HEK293 (cell line): ENCODE measurements at regions of chr11 and their contacts with region 1.

Region 1: DNA sequence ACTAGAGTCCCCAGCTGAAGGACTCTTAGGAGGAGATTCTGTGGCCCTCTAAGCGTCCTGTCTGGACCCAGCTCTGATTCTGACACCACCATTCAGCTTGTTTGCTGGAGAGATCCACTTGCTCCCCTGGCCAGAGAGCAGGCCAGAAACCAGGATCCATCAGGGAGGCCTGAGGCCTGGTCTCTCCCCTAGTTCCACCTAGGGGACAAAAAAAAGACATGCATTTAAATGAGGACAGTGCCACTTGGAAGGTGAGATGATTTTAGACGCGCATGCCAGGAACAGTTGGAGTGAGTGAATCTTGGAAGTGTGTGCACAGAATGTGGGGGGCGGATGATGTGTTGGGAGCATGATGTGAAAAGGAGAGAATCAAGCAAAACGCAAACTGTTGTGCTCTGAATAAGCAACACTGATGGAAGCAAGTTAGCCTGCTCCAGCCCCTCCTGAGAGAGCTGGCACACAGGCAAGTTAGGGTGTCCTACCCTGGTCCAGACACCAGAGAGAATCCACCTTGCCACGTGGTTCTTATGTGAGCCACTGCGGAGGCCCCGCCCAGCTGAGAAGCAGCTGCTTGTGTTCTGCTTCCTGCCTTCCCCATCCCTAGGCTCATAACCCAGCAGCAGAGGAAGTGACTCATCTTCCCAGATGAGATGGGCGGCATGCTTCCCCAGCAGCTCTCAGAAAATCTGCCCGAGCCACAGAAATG is 8.0 kb upstream of the SLCO2B1 start:
- H3K4me3 ChIP-seq: no peak overlapping the region
- H3K27ac ChIP-seq: no peak overlapping the region
- H3K4me1 ChIP-seq: no peaks in the 10 kb centered on the region
- CTCF ChIP-seq: no peak

Region 2: GRCh38 chr11:73493956-73494598 is 1648.8 kb before region 1 on chr11:
- CTCF ChIA-PET with region 1: no interaction called
- POLR2A ChIA-PET with region 1: interaction called, 10 read pairs
- H3K4me3 ChIP-seq: no peak overlapping the region
- H3K27ac ChIP-seq: no peak overlapping the region
- H3K4me1 ChIP-seq: no peaks in the 10 kb centered on the region
- CTCF ChIP-seq: no peak

Region 3: DNA sequence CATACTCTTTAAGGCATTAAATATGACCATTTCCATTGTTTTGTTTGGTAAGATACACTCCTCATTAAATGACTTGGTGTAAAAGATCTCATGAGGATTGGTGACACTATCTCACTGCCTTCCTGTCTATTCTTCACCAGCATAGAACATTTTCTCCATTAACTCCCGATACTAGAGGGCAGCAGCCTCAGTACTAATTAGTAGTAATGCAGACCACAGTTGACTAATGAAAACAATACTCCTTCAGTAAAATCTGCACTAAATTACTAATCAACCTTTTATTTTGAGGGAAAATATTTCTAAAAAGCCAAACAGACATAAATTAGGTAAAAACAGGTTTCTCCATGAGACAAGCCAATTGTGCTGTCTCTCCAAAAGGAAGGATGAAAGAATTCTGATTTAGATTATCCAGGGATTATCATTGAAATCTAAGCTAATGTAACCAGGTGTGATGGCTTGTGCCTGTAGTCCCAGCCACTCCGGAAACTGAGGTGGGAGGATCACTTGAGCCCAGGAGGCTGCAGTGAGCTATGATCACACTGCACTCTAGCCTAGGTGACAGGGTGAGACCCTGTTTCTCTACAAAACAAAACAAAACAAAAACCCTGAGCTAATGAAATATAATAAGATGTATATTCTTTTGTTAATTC is 754.1 kb before region 1 on chr11:
- CTCF ChIA-PET with region 1: no interaction called
- POLR2A ChIA-PET with region 1: no interaction called
- H3K4me3 ChIP-seq: no peak overlapping the region
- H3K27ac ChIP-seq: no peak overlapping the region
- H3K4me1 ChIP-seq: no peaks in the 10 kb centered on the region
- CTCF ChIP-seq: no peak

Region 4: DNA sequence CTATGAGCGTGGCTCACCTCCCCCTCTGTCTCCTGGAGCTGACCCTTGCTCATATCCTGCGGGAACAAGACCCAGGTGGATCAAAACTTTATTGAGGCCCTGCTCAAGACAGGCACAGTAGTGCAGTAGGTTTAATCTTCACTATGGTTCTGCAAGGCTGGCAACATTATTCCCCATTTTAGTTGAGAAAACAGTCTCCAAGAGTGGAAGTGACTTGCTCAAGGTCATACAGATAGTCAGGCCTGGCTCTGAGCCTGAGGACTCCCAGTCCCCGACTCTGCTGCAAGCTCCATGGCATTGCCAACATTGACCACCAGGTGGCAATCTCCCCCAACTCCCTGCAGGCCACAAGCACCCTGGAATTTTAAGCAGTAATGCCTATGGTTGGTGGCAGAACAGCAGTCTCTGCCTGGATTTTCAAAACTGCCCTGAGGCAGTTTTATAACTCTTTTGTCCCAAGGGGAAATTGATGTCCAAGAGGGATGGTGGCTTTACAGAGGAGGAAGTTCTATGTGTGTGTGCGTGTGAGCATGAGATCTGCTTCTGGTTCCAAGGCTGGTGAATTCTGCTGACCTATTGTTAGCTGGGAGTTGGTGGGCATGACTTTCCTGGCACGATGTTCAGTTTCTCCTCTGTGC is 120.0 kb before region 1 on chr11:
- CTCF ChIA-PET with region 1: interaction called, 33 read pairs
- POLR2A ChIA-PET with region 1: interaction called, 6 read pairs
- H3K4me3 ChIP-seq: no peak overlapping the region
- H3K27ac ChIP-seq: no peak overlapping the region
- H3K4me1 ChIP-seq: no peaks in the 10 kb centered on the region
- CTCF ChIP-seq: peak; percentile 67; the same call in 1 of the 2 replicates

Region 5: DNA sequence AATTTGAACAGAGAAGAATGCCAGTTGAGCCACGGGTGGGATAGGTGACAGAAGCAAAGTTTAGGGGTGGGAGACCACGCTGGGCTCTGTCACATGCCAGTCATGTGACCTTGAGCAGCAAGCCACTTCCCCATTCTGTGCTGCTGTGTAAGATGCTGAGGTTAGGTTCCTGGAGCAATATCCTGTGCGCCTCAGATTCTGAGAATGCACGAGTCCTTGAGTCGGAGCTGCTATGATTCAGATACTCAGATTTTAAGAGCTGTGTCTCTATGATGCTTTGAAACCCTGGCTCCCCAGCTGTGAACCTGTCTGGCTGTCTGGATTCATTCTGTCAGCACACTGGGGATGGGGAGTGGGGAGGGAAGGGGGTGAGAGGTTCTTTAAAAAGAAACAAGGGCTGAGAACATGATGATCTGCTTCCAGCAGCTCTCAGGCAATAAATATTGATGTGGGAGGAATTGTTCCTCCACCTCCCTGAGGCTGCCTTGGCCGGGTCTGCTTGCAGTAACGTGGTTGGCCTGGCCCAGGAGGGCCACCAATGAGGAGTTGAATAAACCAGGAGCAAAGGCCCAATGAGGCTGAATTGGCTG is 32.0 kb after region 1 on chr11:
- CTCF ChIA-PET with region 1: interaction called, 10 read pairs
- POLR2A ChIA-PET with region 1: no interaction called
- H3K4me3 ChIP-seq: no peak overlapping the region
- H3K27ac ChIP-seq: no peak overlapping the region
- H3K4me1 ChIP-seq: no peaks in the 10 kb centered on the region
- CTCF ChIP-seq: no peak

Region 6: GRCh38 chr11:75204685-75205563 is 62.1 kb after region 1 on chr11:
- CTCF ChIA-PET with region 1: interaction called, 298 read pairs
- POLR2A ChIA-PET with region 1: no interaction called
- H3K4me3 ChIP-seq: no peak overlapping the region
- H3K27ac ChIP-seq: no peak overlapping the region
- H3K4me1 ChIP-seq: no peaks in the 10 kb centered on the region
- CTCF ChIP-seq: no peak

Region 7: DNA sequence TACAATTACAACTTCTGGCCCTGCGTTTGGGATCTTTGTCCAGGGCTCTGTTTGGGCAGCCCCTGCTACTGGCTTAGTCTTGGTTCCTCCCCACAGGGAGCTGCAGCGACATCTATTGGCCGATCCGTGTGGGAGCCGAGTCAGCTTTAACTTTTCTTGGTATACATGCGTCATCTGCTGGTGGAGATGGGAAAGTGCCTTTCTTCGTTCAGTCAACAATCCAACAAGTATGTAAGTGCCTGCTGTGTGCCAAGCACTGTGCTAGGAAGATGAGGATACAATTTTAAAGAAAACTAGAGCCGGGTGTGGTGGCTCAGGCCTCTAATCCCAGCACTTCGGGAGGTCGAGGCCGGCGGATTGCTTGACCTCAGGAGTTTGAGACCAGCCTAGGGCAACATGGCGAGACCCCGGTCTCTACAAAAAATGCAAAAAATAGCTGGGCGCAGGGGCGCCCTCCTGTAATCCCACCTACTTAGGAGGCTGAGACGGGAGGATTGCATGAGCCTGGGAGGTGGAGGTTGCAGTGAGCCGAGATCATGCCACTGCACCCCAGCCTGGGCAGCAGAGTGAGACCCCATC is 105.9 kb after region 1 on chr11:
- CTCF ChIA-PET with region 1: interaction called, 273 read pairs
- POLR2A ChIA-PET with region 1: no interaction called
- H3K4me3 ChIP-seq: no peak overlapping the region
- H3K27ac ChIP-seq: no peak overlapping the region
- H3K4me1 ChIP-seq: no peaks in the 10 kb centered on the region
- CTCF ChIP-seq: peak; percentile 97